OCI-LY7 (cell line): ENCODE measurements at regions of chr21 and their contacts with region 1.

Region 1: DNA sequence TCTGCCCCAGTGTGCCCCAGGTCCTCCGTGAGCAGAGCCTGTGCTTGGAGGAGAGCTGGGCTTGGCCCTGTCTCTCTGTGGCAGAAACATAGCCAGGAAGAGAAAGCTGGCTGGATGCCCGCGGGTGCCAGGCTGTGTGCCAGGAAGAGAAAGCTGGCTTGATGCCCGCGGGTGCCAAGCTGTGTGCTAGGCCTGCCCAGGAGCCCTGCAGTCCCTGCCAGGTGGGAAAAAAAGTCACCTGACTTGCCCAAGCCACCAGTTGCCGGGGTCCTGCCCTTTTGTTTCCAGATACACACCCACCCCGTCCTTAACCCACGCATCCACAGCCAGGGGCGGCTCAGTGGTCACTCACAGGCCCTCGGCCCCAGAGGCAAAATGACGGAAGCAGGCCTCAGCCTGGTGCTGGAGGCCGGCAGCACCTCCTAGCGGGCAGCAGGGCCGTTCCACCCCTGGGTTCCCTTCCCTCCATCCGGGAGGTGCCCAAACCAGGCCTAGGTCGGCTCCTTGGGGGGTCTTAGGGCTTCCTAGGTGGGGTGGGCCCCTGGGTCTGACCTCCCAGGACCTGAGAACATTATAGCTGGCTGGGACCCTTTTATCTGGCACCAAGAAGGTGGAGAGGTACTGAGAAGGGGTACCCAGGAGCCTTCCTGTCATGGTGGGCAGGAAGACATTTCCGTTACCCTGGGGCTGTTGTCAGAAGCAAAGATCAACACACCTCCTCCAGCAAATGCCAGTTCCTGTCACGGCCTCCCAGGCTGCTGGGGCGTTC is 9.1 kb downstream of the ITGB2 start:
- DNase-seq: peak; percentile 48
- H3K4me3 ChIP-seq: no peak overlapping the region
- H3K27ac ChIP-seq: peak overlapping the region; percentile 23
- H3K4me1 ChIP-seq: peaks cover 39% of the 10 kb centered on the region
- CTCF ChIP-seq: peak; percentile 70

Region 2: DNA sequence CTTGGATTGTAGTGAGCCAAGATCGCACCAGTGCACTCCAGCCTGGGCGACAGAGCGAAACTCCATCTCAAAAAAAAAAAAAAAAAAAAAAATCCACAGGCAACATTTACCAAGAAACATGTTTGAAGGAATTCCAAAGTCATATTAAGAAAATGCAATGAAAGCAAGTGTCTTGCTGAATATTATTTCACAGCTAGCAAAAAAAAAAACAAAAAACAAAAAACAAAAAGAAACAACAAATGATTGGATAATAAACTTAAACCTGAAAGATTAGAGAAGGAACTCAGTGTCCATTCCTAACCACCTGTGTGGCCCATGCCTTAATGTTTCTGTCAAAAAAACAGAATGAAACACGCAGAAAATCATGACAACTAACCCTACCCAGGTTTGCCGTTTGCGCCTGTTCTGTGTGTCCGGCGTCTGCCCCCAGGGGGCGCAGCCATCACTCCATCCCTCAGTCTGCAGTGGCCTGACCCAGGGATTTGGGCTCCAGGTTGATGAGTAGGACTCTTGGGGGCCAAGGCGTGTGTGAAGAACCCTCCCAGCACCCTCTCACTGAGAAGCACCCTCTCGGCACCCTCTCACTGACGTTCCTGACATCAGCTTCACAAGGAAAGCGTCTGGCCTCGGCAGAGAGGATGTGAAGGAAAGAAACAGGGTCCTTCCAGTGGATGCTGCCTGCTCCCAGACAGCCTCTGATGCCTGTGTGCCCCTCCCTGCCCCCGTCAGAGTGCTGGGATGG is 18.9 kb before region 1 on chr21:
- CTCF ChIA-PET with region 1: no interaction called
- POLR2A ChIA-PET with region 1: no interaction called
- intact Hi-C with region 1: loop called (anchors 2 kb)
- DNase-seq: peak; percentile 72
- H3K4me3 ChIP-seq: no peak overlapping the region
- H3K27ac ChIP-seq: no peak overlapping the region
- H3K4me1 ChIP-seq: no peaks in the 10 kb centered on the region
- CTCF ChIP-seq: peak; percentile 95